ENCODE measurements at regions of chr17 and their contacts with region 1.

Region 1: DNA sequence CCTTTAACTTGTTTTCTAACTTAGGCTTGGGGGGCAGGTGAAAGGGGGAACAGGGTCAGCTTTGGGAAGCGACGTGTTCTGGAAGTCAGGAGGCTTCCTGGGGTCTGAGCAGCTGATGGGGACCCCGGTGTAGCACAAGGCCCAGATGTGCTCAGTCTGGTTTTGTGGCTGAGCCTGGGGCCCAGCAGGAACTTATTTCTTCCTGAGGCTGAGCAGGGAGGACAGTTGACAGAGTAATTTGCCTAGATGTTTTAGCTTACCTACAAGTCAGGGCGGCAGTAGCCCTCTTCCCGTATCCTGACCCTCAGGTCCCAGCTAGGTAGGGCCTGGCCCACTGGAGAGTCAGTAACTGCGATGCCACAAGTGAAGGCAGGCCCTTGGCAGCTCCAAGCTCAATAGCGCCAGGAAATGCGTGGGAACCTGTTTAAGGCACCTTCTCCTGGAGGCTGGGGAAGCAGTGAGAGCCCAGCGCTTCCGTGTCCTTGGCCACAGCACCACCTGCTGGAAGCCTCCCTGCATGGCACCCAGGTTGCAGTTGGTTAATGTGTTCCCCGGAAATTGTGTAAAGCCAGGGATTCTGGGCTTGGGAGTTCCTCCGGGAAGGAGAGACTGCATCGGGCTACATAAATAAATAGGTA is 5.2 kb downstream of the CCR7 start:
- DNase-seq: peak; percentile 97 to 99
- ATAC-seq: peak; percentile 84 to 90
- H3K4me3 ChIP-seq: no peak overlapping the region
- H3K27ac ChIP-seq: peak overlapping the region; percentile 95 to 99
- H3K4me1 ChIP-seq: peaks cover 60% of the 10 kb centered on the region
- CTCF ChIP-seq: peak; percentile 99
- EP300 ChIP-seq: peak in 1 of 2 experiments; percentile 22; a peak in 1 of 5 replicates
- POLR2A ChIP-seq: no peak
- RAD21 ChIP-seq: peak; percentile 100

Region 2: GRCh38 chr17:40303009-40303657 is 256.9 kb before region 1 on chr17:
- CTCF ChIA-PET with region 1: interaction called, 13 read pairs
- POLR2A ChIA-PET with region 1: no interaction called
- DNase-seq: peak; percentile 71 to 78
- ATAC-seq: peak; percentile 65 to 79
- H3K4me3 ChIP-seq: no peak overlapping the region
- H3K27ac ChIP-seq: peak overlapping the region; percentile 17 to 47; a peak in 4 of 6 replicates
- H3K4me1 ChIP-seq: peaks cover 38% of the 10 kb centered on the region
- CTCF ChIP-seq: peak; percentile 97
- EP300 ChIP-seq: no peak
- POLR2A ChIP-seq: no peak
- RAD21 ChIP-seq: peak; percentile 96 to 98

Region 3: GRCh38 chr17:40399185-40399584 is 160.9 kb before region 1 on chr17:
- CTCF ChIA-PET with region 1: interaction called, 46 read pairs
- POLR2A ChIA-PET with region 1: no interaction called
- DNase-seq: peak; percentile 67 to 78
- ATAC-seq: peak; percentile 86 to 91; a peak in 5 of 6 replicates
- H3K4me3 ChIP-seq: no peak overlapping the region
- H3K27ac ChIP-seq: peak overlapping the region; percentile 27 to 44; a peak in 3 of 6 replicates
- H3K4me1 ChIP-seq: peaks cover 10% of the 10 kb centered on the region; the same call in 1 of the 3 replicates
- CTCF ChIP-seq: peak; percentile 85
- EP300 ChIP-seq: no peak
- POLR2A ChIP-seq: no peak
- RAD21 ChIP-seq: peak; percentile 50 to 72

Region 4: GRCh38 chr17:40443583-40444327 is 116.3 kb before region 1 on chr17:
- CTCF ChIA-PET with region 1: interaction called, 169 read pairs
- POLR2A ChIA-PET with region 1: interaction called, 8 read pairs
- DNase-seq: peak; percentile 81 to 84
- ATAC-seq: peak; percentile 35 to 60
- H3K4me3 ChIP-seq: peak overlapping the region; percentile 78
- H3K27ac ChIP-seq: peak overlapping the region; percentile 98
- H3K4me1 ChIP-seq: peaks cover 30% of the 10 kb centered on the region
- CTCF ChIP-seq: peak; percentile 44
- EP300 ChIP-seq: no peak
- POLR2A ChIP-seq: peak; percentile 52
- RAD21 ChIP-seq: peak; percentile 27 to 34; a peak in 1 of 5 replicates

Region 5: GRCh38 chr17:40474419-40475002 is 85.6 kb before region 1 on chr17:
- CTCF ChIA-PET with region 1: interaction called, 203 read pairs
- POLR2A ChIA-PET with region 1: interaction called, 22 read pairs
- DNase-seq: no peak
- ATAC-seq: peak; percentile 2 to 4; a peak in 4 of 6 replicates
- H3K4me3 ChIP-seq: no peak overlapping the region
- H3K27ac ChIP-seq: peak overlapping the region; percentile 96 to 97
- H3K4me1 ChIP-seq: peaks cover 83% of the 10 kb centered on the region
- CTCF ChIP-seq: no peak
- EP300 ChIP-seq: no peak
- POLR2A ChIP-seq: 0 out of 2 replicates have a peak, but pooled peaks have one; percentile 5
- RAD21 ChIP-seq: no peak

Region 6: GRCh38 chr17:40510328-40510648 is 49.8 kb before region 1 on chr17:
- CTCF ChIA-PET with region 1: interaction called, 36 read pairs
- POLR2A ChIA-PET with region 1: no interaction called
- DNase-seq: peak; percentile 90 to 96
- ATAC-seq: peak; percentile 92 to 94
- H3K4me3 ChIP-seq: no peak overlapping the region
- H3K27ac ChIP-seq: peak overlapping the region; percentile 97 to 99
- H3K4me1 ChIP-seq: peaks cover 54% of the 10 kb centered on the region
- CTCF ChIP-seq: no peak
- EP300 ChIP-seq: peak; percentile 79 to 88; a peak in 3 of 5 replicates
- POLR2A ChIP-seq: no peak
- RAD21 ChIP-seq: peak in 1 of 2 experiments; percentile 25; a peak in 1 of 5 replicates

Region 7: GRCh38 chr17:40582328-40582901 is 22.3 kb after region 1 on chr17:
- CTCF ChIA-PET with region 1: interaction called, 25 read pairs
- POLR2A ChIA-PET with region 1: no interaction called
- DNase-seq: no peak
- ATAC-seq: 0 out of 6 replicates have a peak, but pooled peaks have one; percentile 26 to 39
- H3K4me3 ChIP-seq: no peak overlapping the region
- H3K27ac ChIP-seq: no peak overlapping the region
- H3K4me1 ChIP-seq: no peaks in the 10 kb centered on the region
- CTCF ChIP-seq: no peak
- EP300 ChIP-seq: no peak
- POLR2A ChIP-seq: no peak
- RAD21 ChIP-seq: no peak

Region 8: GRCh38 chr17:40664582-40665333 is 104.7 kb after region 1 on chr17 and contains the start of gene KRT222:
- CTCF ChIA-PET with region 1: no interaction called
- POLR2A ChIA-PET with region 1: no interaction called
- DNase-seq: no peak
- ATAC-seq: peak; percentile 61 to 77; a peak in 4 of 6 replicates
- H3K4me3 ChIP-seq: peak within 1 kb of the TSS; percentile 34
- H3K27ac ChIP-seq: peak within 1 kb of the TSS; percentile 25 to 68; a peak in 5 of 6 replicates
- H3K4me1 ChIP-seq: peaks cover 7% of the 10 kb centered on the region; the same call in 2 of the 3 replicates
- CTCF ChIP-seq: no peak
- EP300 ChIP-seq: no peak
- POLR2A ChIP-seq: no peak
- RAD21 ChIP-seq: no peak
- polyA plus RNA-seq, gene KRT222: 1.3 and 1.8 TPM in 2 replicates

Region 9: DNA sequence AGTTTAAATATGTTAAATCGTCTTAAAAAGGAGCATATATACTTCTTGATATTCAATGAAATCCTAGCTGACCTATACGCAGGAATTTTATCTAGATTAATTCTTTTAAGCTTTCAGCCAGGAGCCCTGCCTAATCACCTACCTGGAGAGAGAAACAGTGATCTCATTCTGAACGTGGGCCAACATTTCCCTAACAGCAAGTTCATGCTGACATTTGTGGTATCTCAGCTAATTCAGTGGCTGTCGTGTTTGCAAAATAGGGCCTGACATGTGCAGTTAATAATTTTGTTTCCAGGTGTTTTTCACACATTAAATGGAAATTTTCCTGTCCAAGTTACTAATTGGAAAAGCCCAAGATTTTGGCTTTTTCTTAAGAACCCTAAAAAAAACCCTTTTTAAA is 126.1 kb after region 1 on chr17:
- CTCF ChIA-PET with region 1: no interaction called
- POLR2A ChIA-PET with region 1: no interaction called
- DNase-seq: no peak
- ATAC-seq: no peak
- H3K4me3 ChIP-seq: no peak overlapping the region
- H3K27ac ChIP-seq: no peak overlapping the region
- H3K4me1 ChIP-seq: no peaks in the 10 kb centered on the region
- CTCF ChIP-seq: no peak
- EP300 ChIP-seq: no peak
- POLR2A ChIP-seq: no peak
- RAD21 ChIP-seq: no peak

Measured in A549 (cell line).